ENCODE measurements at regions of chr5 and their contacts with region 1.

Region 1: GRCh38 chr5:139642891-139643871 is 5.0 kb upstream of the CXXC5 start:
- DNase-seq: peak; percentile 79 to 85
- H3K4me3 ChIP-seq: peak overlapping the region; percentile 31; the same call in 1 of the 2 replicates
- H3K27ac ChIP-seq: peak overlapping the region; percentile 57
- H3K4me1 ChIP-seq: peaks cover 84% of the 10 kb centered on the region
- H3K27me3 ChIP-seq: no peaks in the 10 kb centered on the region
- CTCF ChIP-seq: no peak

Region 2: DNA sequence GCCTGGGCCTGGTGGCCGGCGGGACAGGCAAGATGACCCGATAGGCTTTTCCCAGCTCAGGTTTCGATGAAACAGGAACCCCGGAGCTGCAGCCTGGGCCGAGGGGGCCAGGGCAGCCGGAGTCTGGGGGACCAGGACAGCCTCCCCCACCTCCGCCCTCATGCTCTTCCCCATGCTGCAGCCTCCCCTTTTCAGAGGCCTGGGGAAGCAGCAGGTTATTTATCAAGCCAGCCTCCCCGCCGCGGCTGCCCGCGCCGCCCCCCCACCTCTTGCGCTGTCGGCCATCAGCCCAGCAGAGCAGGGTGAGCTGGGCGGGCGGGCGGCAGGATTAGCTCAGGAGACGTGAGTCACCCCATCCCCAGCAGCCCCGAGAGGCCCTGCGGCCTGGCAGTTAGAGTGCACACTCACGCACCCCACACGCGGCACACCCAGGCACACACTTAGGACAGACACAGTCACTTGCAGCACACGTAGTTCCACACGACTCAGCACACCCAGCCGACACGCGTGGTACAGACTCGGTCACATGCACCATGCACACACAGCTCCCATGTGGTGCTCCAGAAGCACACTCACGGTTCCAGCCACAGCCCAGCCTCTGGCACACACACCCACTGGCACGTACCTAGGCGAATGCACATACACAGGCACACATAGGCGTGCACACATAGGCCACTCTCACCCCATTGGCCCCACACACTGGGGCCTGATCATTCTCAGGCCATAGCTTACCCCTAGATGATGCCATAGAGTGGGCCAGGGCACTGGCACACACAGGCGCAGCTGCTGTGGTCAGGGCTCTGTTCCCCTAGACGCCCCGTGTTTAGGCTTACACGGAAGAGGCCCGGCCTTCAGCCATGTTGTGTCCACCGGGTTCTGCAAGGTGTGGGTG is 18.0 kb after region 1 on chr5:
- CTCF ChIA-PET with region 1: interaction called, 4 read pairs
- POLR2A ChIA-PET with region 1: interaction called, 10 read pairs
- intact Hi-C with region 1: loop called (anchors 2 kb)
- DNase-seq: peak; percentile 87 to 90
- H3K4me3 ChIP-seq: peak overlapping the region; percentile 52; the same call in 1 of the 2 replicates
- H3K27ac ChIP-seq: peak overlapping the region; percentile 78
- H3K4me1 ChIP-seq: peaks cover 78% of the 10 kb centered on the region
- H3K27me3 ChIP-seq: no peaks in the 10 kb centered on the region
- CTCF ChIP-seq: no peak